Transverse colon (tissue), 4 donors: ENCODE measurements at regions of chr7 and their contacts with region 1.

Region 1: GRCh38 chr7:26365077-26365900 is 73.6 kb downstream of the SNX10 start:
- DNase-seq: peak; percentile 57
- H3K4me3 ChIP-seq: no peak overlapping the region
- H3K27ac ChIP-seq: no peak overlapping the region
- H3K4me1 ChIP-seq: peaks cover 0 to 13% (median 3%) of the 10 kb centered on the region in 4 donors
- H3K27me3 ChIP-seq: peaks cover 16% of the 10 kb centered on the region
- CTCF ChIP-seq: peak; percentile 69 to 86 (median 77)
- EP300 ChIP-seq: no peak
- POLR2A ChIP-seq: no peak

Region 2: DNA sequence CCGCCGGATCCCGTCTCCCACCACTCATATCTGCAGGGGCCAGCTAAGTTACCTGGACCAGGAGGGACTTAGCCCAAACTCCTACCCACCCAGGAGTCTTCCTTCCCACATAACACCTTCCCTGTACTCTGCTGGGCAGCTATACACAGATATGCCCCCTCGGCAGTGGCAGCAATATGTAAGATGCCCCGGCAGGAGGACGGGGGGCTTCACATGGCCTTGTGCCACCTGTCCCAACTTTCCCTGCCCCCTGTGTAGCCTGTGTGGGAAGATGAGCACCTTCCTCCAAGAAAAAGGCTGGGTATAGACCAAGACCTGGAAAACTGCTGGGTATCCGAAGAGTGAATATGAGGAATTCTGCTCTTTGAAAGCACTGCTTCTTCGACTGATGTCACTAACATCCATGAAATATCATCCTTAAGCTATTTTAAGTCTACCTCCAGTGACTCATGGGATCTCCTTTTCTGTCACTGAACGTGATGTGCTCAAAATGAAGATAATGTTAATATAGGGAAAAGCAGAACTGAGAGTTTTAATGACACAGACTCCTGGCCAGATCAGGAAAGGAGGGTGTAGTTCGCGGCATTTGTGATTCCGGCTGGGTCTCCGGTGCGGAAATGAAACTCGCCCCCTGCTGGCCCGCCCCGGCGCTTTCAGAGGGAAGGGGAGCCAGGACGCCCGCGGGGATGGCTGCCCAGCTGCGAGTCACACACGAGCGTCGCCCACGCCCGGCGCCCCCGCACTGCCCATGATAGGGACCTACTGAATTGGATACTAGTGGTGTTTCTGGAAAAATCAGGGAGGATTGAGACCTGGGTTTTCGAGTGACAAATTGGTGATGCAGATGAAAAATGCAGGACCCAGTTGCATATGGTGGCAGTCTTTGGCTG is 470.1 kb before region 1 on chr7:
- in situ Hi-C with region 1: loop called in 3 of 4 experiments (anchors 5 to 10 kb)
- intact Hi-C with region 1: loop called (anchors 2 kb)
- DNase-seq: peak; percentile 85
- H3K4me3 ChIP-seq: peak overlapping the region in 1 of 4 donors; percentile 34
- H3K27ac ChIP-seq: peak overlapping the region in 2 of 4 donors; percentile 45 to 61
- H3K4me1 ChIP-seq: peaks cover 0 to 11% (median 3%) of the 10 kb centered on the region in 4 donors
- H3K27me3 ChIP-seq: peaks cover 6% of the 10 kb centered on the region
- CTCF ChIP-seq: peak; percentile 71 to 78 (median 75)
- EP300 ChIP-seq: no peak
- POLR2A ChIP-seq: no peak

Region 3: DNA sequence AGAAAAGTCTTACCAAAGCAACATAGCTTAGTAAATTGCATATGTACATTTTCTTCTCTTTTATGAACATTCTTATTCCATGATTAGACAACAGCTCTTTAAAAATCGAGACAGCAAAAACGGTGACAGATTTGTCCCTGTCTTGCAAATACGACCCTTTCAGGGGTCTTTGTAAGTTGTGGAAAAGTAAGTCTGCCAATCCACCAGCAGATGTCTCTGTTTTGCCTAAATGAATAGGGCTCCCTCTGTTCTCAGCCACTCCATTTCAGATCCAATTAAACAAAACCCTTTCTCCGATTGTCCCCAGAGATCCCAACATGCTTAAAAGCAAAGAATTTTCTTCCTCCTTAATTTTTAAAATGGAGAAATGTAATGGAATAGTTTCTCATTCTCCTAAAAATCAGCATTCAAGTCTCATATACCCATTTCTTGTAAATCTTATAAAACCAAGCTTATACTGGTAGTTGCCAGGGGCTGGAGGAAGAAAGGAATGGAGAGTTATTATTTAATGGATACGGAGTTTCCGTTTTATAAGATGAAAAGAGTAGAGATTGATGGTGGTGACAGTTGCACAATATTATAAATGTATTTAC is 274.3 kb before region 1 on chr7:
- in situ Hi-C with region 1: loop called (anchors 5 to 10 kb)
- intact Hi-C with region 1: loop called (anchors 10 kb)
- DNase-seq: no peak
- H3K4me3 ChIP-seq: no peak overlapping the region
- H3K27ac ChIP-seq: no peak overlapping the region
- H3K4me1 ChIP-seq: peaks cover 0 to 7% (median 2%) of the 10 kb centered on the region in 4 donors
- H3K27me3 ChIP-seq: no peaks in the 10 kb centered on the region
- CTCF ChIP-seq: peak; percentile 57 to 78 (median 61)
- EP300 ChIP-seq: no peak
- POLR2A ChIP-seq: no peak

Region 4: DNA sequence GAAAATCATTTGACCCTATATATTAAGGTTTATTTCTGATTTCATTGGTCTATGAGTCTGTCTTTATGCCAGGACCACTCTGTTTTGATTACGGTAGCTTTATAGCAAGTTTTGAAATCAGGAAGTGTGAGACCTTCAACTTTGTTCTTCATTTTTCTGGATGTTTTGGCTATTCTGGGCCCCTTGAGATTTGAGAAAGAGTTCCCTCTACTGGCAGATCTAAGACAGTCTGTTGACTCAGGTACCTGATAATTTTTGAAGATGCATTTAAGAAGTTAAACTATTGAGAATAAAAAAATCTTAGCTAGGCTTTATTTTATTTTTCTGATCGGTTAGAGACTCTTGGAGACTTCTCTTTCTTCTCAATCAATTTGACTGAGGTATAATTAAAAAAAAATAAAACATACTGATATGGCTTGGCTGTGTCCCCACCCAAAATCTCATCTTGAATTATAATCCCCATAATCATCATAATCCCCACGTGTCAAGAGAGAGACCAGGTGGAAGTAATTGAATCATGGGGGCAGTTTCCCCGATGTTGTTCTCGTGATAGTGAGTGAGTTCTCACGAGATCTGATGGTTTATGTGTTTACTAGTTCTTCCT is 135.6 kb after region 1 on chr7:
- in situ Hi-C with region 1: loop called in 2 of 4 experiments (anchors 5 to 10 kb)
- intact Hi-C with region 1: no loop called
- DNase-seq: no peak
- H3K4me3 ChIP-seq: no peak overlapping the region
- H3K27ac ChIP-seq: no peak overlapping the region
- H3K4me1 ChIP-seq: no peaks in the 10 kb centered on the region
- H3K27me3 ChIP-seq: no peaks in the 10 kb centered on the region
- CTCF ChIP-seq: peak; percentile 34 to 59 (median 44)
- EP300 ChIP-seq: no peak
- POLR2A ChIP-seq: no peak

Region 5: GRCh38 chr7:26864309-26865093 is 499.2 kb after region 1 on chr7 and contains the start of gene SKAP2:
- in situ Hi-C with region 1: loop called in 1 of 4 experiments (anchors 25 kb)
- intact Hi-C with region 1: no loop called
- DNase-seq: peak; percentile 99
- H3K4me3 ChIP-seq: peak within 1 kb of the TSS; percentile 66 to 71 (median 68)
- H3K27ac ChIP-seq: peak within 1 kb of the TSS; percentile 95 to 98 (median 96)
- H3K4me1 ChIP-seq: peaks cover 2 to 46% (median 20%) of the 10 kb centered on the region in 4 donors
- H3K27me3 ChIP-seq: no peaks in the 10 kb centered on the region
- CTCF ChIP-seq: no peak
- EP300 ChIP-seq: no peak
- POLR2A ChIP-seq: peak; percentile 99
- total RNA-seq, gene SKAP2: 2.6 to 35.2 (median 23.8) TPM

Region 6: GRCh38 chr7:27160546-27161213 is 795.4 kb after region 1 on chr7:
- in situ Hi-C with region 1: loop called in 3 of 4 experiments (anchors 5 to 25 kb)
- intact Hi-C with region 1: loop called (anchors 2 kb)
- DNase-seq: peak; percentile 94
- H3K4me3 ChIP-seq: peak overlapping the region; percentile 30 to 62 (median 48)
- H3K27ac ChIP-seq: peak overlapping the region; percentile 95 to 99 (median 98)
- H3K4me1 ChIP-seq: peaks cover 4 to 41% (median 19%) of the 10 kb centered on the region in 4 donors
- H3K27me3 ChIP-seq: peaks cover 18% of the 10 kb centered on the region
- CTCF ChIP-seq: peak; percentile 100
- EP300 ChIP-seq: no peak
- POLR2A ChIP-seq: peak; percentile 27